IMR-90 (cell line): ENCODE measurements at regions of chr2 and their contacts with region 1.

Region 1: DNA sequence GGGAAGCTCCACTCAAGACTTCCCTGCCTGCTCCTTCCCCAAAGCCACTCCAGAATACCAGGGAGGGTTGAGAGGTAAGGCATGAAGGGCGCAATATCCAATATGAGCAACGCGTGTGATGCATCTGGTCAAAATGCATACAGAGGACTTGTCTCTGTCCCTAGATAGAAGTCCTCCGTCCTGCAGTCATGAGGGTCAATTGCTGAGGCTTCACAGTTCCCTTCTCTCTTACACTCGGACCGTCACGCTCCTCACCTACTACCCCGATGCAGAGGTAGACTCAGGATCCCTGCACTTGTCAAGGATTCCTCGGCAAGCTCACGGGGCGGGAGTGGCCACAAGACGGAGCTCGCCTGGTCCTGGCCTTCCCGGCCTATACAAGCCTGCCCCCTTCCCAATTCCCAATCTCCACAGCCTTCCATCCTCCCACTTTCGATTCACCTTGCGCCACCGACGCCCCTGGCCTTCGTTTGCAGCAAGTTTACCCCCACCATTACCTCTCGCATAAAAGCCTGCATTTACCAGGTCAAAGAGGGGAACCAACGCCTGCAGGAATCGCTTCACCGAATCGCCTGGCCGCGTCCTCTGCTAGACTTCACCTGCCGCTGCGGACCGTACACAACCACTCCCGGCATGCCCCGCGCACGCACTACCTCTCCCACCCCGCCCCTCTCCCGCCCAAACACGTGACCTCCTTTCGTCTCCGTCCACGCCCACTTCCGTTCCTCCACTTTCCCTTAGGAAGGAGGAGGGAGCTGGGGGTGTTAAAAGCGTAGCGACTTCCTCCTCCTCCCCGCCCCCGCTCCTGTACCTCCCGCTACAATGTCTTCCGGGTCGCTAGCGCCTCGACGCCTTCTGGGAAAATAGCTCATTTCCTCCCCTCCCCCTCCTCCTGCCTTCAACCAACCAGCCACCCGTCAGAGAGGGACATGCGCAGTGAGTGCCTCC is at the start of gene ORC4:
- DNase-seq: peak; percentile 99
- ATAC-seq: peak; percentile 95
- H3K4me3 ChIP-seq: peak within 1 kb of the TSS; percentile 96
- H3K27ac ChIP-seq: peak within 1 kb of the TSS; percentile 92
- H3K4me1 ChIP-seq: 0 out of 2 replicates have a peak, but pooled peaks cover 2% of the 10 kb centered on the region
- H3K27me3 ChIP-seq: no peaks in the 10 kb centered on the region
- CTCF ChIP-seq: peak; percentile 38
- POLR2A ChIP-seq: peak; percentile 26; the same call in 1 of the 2 replicates
- RAD21 ChIP-seq: peak; percentile 27
- total RNA-seq, gene ORC4: 23.5 and 63.9 TPM in 2 replicates

Region 2: DNA sequence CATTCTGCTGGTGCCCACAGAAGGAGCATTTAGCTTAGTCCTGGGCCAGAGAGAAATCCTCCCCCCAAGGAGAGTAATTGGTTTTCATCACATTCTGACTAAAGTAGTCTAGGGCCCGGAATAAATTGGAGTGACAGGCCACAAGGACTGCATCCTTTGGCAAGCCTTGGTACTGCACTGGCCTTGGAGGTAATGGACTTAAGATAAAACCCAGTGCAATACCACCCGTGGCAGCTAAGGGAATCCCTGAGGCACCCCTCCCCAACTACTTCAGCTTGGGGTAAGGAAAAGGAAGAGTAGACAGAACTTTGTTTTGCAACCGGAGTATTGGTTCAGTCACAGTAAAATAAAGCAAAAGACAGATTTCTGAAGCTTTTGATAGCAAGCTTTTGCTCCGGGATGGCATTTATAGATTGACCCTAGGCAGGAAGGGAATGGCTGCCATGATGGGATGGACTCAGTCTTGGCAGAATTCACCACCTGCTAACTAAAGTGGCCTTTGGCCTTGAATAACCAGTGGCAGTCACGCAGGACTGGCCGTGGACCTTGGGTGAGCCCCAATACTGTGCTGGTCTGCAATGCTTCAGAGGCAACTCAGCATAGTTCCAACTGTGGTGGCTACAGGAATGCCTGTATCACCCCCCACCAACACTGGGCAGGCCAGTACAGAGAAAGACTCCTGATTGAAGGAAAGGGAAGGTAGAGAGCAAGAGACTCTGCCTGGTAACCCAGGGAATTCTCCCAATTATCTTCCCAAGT is 14.0 kb before region 1 on chr2:
- CTCF ChIA-PET with region 1: no interaction called
- POLR2A ChIA-PET with region 1: interaction called, 10 read pairs
- dilution Hi-C with region 1: no loop called
- in situ Hi-C with region 1: no loop called
- intact Hi-C with region 1: no loop called
- DNase-seq: no peak
- ATAC-seq: no peak
- H3K4me3 ChIP-seq: no peak overlapping the region
- H3K27ac ChIP-seq: no peak overlapping the region
- H3K4me1 ChIP-seq: no peaks in the 10 kb centered on the region
- H3K27me3 ChIP-seq: no peaks in the 10 kb centered on the region
- CTCF ChIP-seq: no peak
- POLR2A ChIP-seq: no peak
- RAD21 ChIP-seq: no peak

Region 3: GRCh38 chr2:148273158-148273691 is 252.8 kb after region 1 on chr2:
- CTCF ChIA-PET with region 1: no interaction called
- POLR2A ChIA-PET with region 1: no interaction called
- dilution Hi-C with region 1: no loop called
- in situ Hi-C with region 1: no loop called
- intact Hi-C with region 1: loop called (anchors 5 kb)
- DNase-seq: peak; percentile 53
- ATAC-seq: peak; percentile 95
- H3K4me3 ChIP-seq: no peak overlapping the region
- H3K27ac ChIP-seq: peak overlapping the region; percentile 58
- H3K4me1 ChIP-seq: peaks cover 5% of the 10 kb centered on the region
- H3K27me3 ChIP-seq: no peaks in the 10 kb centered on the region
- CTCF ChIP-seq: no peak
- POLR2A ChIP-seq: no peak
- RAD21 ChIP-seq: no peak

Region 4: DNA sequence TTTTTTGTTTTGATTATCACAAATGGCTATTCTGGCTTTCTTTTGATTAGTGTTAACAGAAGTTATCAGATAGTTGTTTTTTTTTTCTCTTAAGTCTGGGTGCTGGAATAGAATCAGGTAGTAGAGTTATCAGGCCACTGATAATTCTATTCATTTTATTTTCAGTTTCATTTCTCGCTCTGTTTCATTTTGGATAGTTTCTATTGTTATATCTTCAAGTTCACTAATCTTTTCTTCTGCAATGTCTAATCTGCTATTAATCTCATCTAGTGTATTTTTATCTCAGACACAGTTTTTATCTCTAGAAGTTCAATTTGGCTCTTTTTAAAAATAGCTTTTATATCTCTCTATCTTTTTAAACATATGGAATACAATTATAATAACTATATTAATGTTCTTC is 382.4 kb after region 1 on chr2:
- CTCF ChIA-PET with region 1: no interaction called
- POLR2A ChIA-PET with region 1: no interaction called
- dilution Hi-C with region 1: no loop called
- in situ Hi-C with region 1: no loop called
- intact Hi-C with region 1: no loop called
- DNase-seq: no peak
- ATAC-seq: no peak
- H3K4me3 ChIP-seq: no peak overlapping the region
- H3K27ac ChIP-seq: no peak overlapping the region
- H3K4me1 ChIP-seq: no peaks in the 10 kb centered on the region
- H3K27me3 ChIP-seq: no peaks in the 10 kb centered on the region
- CTCF ChIP-seq: no peak
- POLR2A ChIP-seq: no peak
- RAD21 ChIP-seq: no peak